Right cardiac atrium (tissue), 5 donors: ENCODE measurements at regions of chr10 and their contacts with region 1.

Region 1: DNA sequence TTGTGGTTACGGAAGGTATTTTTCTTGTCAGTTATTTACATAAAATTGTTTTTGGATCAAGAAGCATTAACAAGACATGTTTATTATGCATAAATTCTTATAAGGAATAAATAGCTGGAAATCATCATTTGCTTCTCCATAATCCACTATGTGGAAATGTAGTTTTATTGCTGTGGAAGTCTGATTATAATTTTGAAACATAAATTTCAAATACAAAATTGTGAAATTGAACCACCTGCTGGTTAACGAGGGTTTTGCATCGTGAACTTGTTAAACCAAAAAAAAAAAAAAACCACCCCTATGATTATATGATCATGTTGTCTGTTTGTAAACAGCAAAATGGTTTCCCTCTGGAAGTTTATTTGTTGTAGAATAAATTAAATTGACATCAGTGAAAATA is 25.9 kb downstream of the ABRAXAS2 start:
- DNase-seq: no peak
- ATAC-seq: no peak
- H3K4me3 ChIP-seq: no peak overlapping the region
- H3K27ac ChIP-seq: no peak overlapping the region
- H3K4me1 ChIP-seq: no peaks in the 10 kb centered on the region
- H3K27me3 ChIP-seq: no peaks in the 10 kb centered on the region

Region 2: DNA sequence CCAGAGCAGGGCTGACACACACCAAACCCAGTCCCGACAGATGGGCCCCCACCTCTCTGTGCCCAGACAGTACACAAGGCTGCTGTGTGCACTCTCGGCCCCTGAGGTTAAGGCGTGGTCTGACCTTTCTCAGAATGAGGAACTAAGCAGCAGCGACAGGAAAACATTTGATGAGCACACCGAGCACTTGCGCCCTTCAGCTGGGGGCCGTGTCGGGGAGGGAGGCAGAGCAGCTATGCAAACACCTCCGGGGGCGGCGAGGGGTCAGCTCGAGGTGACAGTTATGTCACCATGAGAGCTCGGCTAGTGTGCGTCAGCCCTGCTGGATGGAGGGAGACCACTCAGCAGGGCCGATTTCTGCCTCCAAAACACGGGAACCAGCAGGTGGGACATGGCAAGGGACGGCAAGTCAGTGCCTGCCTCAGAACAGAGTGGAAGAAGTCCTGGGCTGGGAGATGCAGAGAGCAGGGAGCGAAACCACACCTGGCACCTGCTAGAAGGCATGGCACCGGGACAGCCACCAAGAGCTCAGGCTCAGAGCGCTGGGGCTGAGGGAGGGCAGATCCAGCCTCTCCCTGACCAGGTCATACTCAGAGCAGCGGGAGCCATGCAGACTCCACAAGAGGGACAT is 791.4 kb before region 1 on chr10:
- intact Hi-C with region 1: no loop called
- DNase-seq: peak; percentile 31 to 72 (median 63)
- ATAC-seq: peak in 1 of 2 donors; percentile 27
- H3K4me3 ChIP-seq: no peak overlapping the region
- H3K27ac ChIP-seq: no peak overlapping the region
- H3K4me1 ChIP-seq: peaks cover 7% of the 10 kb centered on the region
- H3K27me3 ChIP-seq: no peaks in the 10 kb centered on the region

Region 3: GRCh38 chr10:124530215-124530665 is 297.2 kb before region 1 on chr10:
- intact Hi-C with region 1: loop called (anchors 5 to 10 kb)
- DNase-seq: peak; percentile 86 to 96 (median 95)
- ATAC-seq: peak; percentile 84 to 87
- H3K4me3 ChIP-seq: no peak overlapping the region
- H3K27ac ChIP-seq: no peak overlapping the region
- H3K4me1 ChIP-seq: no peaks in the 10 kb centered on the region
- H3K27me3 ChIP-seq: no peaks in the 10 kb centered on the region

Region 4: DNA sequence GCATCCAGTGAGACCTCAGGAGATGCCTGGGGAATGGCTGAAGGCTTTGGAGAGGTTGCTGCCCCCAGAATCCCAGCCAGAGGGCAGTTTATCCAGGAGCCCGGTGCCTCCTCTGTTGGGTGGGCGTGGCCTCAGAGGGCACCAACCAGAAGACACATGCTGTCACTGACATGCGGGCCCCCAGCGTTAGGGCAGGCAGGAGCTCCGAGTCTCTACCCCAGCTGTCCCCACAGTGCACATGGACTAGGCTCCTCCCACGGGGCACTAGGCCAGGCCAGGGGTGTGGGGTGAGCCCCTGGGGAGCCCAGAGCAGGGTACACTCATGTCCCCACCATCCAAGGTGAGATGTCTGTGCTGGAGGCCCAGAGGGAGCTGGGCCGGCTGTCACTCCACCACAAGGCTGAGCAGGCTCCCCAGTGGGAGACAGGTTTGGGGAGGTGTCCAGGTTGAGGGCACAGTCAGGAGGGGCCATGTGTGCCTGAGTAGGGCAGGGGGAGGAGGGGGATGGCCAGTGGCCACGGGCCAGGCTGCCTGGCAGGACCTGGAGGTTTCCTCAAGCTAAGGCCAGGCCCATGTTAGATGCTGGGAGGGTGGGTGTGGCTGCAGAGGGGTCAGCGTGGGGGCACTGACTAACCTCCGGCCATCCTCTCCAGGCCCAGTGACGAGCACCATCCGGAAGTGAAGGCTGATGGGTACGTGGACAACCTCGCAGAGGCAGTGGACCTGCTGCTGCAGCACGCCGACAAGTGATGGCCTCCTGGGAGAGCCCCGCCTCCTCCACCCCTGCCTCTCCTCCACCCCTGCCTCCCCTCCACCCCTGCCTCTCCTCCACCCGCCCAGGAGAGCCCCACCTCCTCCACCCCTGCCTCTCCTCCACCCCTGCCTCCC is 214.6 kb before region 1 on chr10:
- intact Hi-C with region 1: no loop called
- DNase-seq: peak in 2 of 3 donors; percentile 71 to 73
- ATAC-seq: peak; percentile 42 to 84
- H3K4me3 ChIP-seq: no peak overlapping the region
- H3K27ac ChIP-seq: no peak overlapping the region
- H3K4me1 ChIP-seq: peaks cover 4% of the 10 kb centered on the region
- H3K27me3 ChIP-seq: no peaks in the 10 kb centered on the region